B cell (primary cell): ENCODE measurements at regions of chr9 and their contacts with region 1.

Region 1: GRCh38 chr9:37209431-37210386 is 89.3 kb downstream of the ZCCHC7 start:
- DNase-seq: peak; percentile 49
- ATAC-seq: peak; percentile 36
- H3K4me3 ChIP-seq: peak overlapping the region in 2 of 5 experiments; percentile 2 to 46
- H3K4me3 Mint-ChIP-seq: peak overlapping the region; percentile 80
- H3K27ac ChIP-seq: peak overlapping the region; percentile 71 to 87
- H3K27ac Mint-ChIP-seq: peak overlapping the region; percentile 92
- H3K4me1 ChIP-seq: peaks cover 57 to 82% of the 10 kb centered on the region in 2 donors
- H3K4me1 Mint-ChIP-seq: peaks cover 65% of the 10 kb centered on the region
- H3K27me3 ChIP-seq: no peaks in the 10 kb centered on the region
- H3K27me3 Mint-ChIP-seq: no peaks in the 10 kb centered on the region
- CTCF ChIP-seq: no peak

Region 2: GRCh38 chr9:36946653-36947052 is 263.1 kb before region 1 on chr9:
- CTCF ChIA-PET with region 1: no interaction called
- POLR2A ChIA-PET with region 1: interaction called, 10 read pairs
- intact Hi-C with region 1: no loop called
- DNase-seq: no peak
- ATAC-seq: no peak
- H3K4me3 ChIP-seq: no peak overlapping the region
- H3K4me3 Mint-ChIP-seq: no peak overlapping the region
- H3K27ac ChIP-seq: peak overlapping the region in 1 of 2 donors; percentile 77
- H3K27ac Mint-ChIP-seq: peak overlapping the region; percentile 86
- H3K4me1 ChIP-seq: peaks cover 36 to 38% of the 10 kb centered on the region in 2 donors
- H3K4me1 Mint-ChIP-seq: peaks cover 62% of the 10 kb centered on the region
- H3K27me3 ChIP-seq: no peaks in the 10 kb centered on the region
- H3K27me3 Mint-ChIP-seq: no peaks in the 10 kb centered on the region
- CTCF ChIP-seq: no peak

Region 3: DNA sequence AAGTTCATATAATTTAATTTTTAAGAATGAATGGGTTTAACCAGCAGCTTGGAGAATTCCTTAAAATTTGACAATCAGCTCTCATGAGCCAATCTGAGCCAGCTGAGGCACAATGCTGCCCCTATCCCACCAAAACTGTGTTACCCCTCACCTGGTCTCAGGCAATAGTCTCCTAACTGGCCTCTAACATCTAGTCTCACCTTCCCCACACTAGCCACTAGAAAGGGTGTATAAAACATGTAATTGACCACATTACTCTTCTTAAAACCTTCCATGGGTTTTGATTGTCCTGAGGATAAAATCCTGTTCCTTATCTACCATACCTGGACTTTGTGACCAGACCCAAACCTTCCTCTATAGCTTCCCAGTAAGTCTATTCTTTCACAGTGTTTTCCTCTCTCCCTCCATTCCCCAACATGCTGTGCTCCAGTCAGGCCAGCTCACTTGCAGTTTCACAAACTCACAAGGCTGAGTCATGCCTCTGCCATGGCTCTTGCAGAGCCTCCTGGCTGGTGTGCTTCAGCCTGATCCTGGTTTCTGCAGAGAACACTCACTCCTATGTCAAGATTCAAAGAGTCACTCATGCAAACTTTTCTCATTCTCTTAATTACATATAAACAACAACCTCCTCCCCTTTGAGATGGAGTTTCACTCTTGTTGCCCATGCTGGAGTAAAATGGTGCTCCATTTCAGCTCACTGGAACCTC is 105.4 kb before region 1 on chr9:
- CTCF ChIA-PET with region 1: no interaction called
- POLR2A ChIA-PET with region 1: no interaction called
- intact Hi-C with region 1: no loop called
- DNase-seq: no peak
- ATAC-seq: no peak
- H3K4me3 ChIP-seq: no peak overlapping the region
- H3K4me3 Mint-ChIP-seq: no peak overlapping the region
- H3K27ac ChIP-seq: no peak overlapping the region
- H3K27ac Mint-ChIP-seq: no peak overlapping the region
- H3K4me1 ChIP-seq: peaks cover 38 to 43% of the 10 kb centered on the region in 2 donors
- H3K4me1 Mint-ChIP-seq: peaks cover 53% of the 10 kb centered on the region
- H3K27me3 ChIP-seq: no peaks in the 10 kb centered on the region
- H3K27me3 Mint-ChIP-seq: no peaks in the 10 kb centered on the region
- CTCF ChIP-seq: no peak

Region 4: DNA sequence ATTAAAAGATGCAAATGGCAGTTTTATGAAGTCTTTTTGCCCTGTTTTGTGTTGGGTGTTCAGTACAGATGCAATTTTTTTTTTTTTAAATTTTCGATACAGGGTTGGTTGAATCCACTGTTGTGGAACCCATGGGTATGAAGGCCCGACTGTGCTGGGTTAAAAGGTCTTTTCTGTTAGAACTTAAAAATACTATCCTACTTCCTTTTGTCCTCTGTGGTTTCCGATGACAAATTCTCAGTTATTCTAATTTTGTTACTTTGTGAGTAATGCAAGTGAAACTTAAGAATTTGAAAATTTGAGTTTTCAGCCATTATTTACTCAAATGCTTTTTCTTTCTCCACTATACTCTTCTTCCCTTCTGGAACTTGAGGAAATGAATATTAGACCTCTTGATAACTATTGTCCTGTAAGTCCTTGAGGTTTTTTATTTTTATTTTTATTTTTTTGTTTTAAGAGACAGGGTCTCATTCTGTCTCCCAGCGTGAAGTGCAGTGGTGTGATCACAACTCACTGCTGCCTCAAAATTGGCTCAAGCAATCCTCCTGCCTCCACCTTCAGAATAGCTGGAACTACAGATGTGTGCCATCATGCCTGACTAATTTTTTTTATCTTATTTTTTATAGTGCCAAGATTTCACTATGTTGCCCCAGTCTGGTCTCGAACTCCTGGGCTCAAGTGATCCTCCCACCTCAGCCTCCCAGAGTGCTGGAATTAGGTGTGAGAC is 21.8 kb before region 1 on chr9:
- CTCF ChIA-PET with region 1: interaction called, 13 read pairs
- POLR2A ChIA-PET with region 1: interaction called, 5 read pairs
- intact Hi-C with region 1: no loop called
- DNase-seq: no peak
- ATAC-seq: peak; percentile 78
- H3K4me3 ChIP-seq: peak overlapping the region; percentile 29 to 56 (median 41)
- H3K4me3 Mint-ChIP-seq: peak overlapping the region; percentile 82
- H3K27ac ChIP-seq: peak overlapping the region; percentile 89 to 92
- H3K27ac Mint-ChIP-seq: peak overlapping the region; percentile 70
- H3K4me1 ChIP-seq: peaks cover 46 to 76% of the 10 kb centered on the region in 2 donors
- H3K4me1 Mint-ChIP-seq: peaks cover 75% of the 10 kb centered on the region
- H3K27me3 ChIP-seq: no peaks in the 10 kb centered on the region
- H3K27me3 Mint-ChIP-seq: no peaks in the 10 kb centered on the region
- CTCF ChIP-seq: no peak

Region 5: DNA sequence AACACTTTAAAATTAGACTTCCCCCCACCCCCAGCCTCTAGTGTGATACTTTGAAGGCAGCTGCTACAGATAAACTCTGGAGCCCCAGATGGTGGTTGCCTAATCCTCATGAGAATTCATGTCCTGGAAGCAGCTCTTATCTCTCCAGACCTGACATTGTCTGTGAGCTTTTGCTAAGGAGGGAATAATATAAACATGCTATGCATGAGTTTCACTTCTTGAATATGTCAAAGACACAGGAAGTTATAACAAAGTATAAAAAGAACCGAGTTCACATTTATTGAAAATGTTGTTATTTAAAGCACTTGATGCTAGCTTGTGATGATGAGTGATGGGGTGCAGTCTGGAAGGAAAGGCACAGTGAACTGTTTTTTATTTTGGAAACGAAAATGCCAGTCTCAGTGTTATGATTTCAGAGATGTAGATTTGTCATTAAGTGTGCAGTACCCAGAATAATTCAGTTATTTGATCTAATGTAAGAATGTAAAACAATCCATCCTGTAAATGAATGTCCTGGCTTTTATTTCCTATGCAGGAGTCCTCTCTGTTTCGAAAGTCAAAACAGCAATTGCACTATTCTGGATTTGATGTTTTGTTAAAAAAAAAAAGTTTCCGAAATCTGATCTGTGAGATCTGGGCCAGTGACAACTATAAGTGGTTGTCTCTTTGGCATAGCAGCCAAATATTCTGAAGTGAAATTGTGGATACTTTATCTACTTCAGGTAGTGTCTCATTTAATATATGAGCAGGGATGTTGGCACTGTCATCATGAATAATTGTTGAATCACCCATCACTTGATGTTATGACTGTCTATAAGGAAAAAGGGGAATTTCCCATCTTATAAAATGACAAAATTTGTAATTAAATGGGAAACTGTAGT is 12.3 kb before region 1 on chr9:
- CTCF ChIA-PET with region 1: interaction called, 13 read pairs
- POLR2A ChIA-PET with region 1: interaction called, 6 read pairs
- intact Hi-C with region 1: loop called (anchors 1 kb)
- DNase-seq: peak; percentile 83
- ATAC-seq: peak; percentile 79
- H3K4me3 ChIP-seq: peak overlapping the region in 3 of 5 experiments; percentile 13 to 35 (median 21)
- H3K4me3 Mint-ChIP-seq: peak overlapping the region; percentile 76
- H3K27ac ChIP-seq: peak overlapping the region; percentile 81 to 87
- H3K27ac Mint-ChIP-seq: peak overlapping the region; percentile 87
- H3K4me1 ChIP-seq: peaks cover 83 to 91% of the 10 kb centered on the region in 2 donors
- H3K4me1 Mint-ChIP-seq: peaks cover 82% of the 10 kb centered on the region
- H3K27me3 ChIP-seq: no peaks in the 10 kb centered on the region
- H3K27me3 Mint-ChIP-seq: no peaks in the 10 kb centered on the region
- CTCF ChIP-seq: no peak

Region 6: GRCh38 chr9:37229882-37230487 is 20.3 kb after region 1 on chr9:
- CTCF ChIA-PET with region 1: interaction called, 4 read pairs
- POLR2A ChIA-PET with region 1: no interaction called
- intact Hi-C with region 1: loop called (anchors 2 kb)
- DNase-seq: no peak
- ATAC-seq: no peak
- H3K4me3 ChIP-seq: no peak overlapping the region
- H3K4me3 Mint-ChIP-seq: no peak overlapping the region
- H3K27ac ChIP-seq: no peak overlapping the region
- H3K27ac Mint-ChIP-seq: peak overlapping the region; percentile 2
- H3K4me1 ChIP-seq: peaks cover 20 to 40% of the 10 kb centered on the region in 2 donors
- H3K4me1 Mint-ChIP-seq: peaks cover 49% of the 10 kb centered on the region
- H3K27me3 ChIP-seq: no peaks in the 10 kb centered on the region
- H3K27me3 Mint-ChIP-seq: no peaks in the 10 kb centered on the region
- CTCF ChIP-seq: no peak

Region 7: DNA sequence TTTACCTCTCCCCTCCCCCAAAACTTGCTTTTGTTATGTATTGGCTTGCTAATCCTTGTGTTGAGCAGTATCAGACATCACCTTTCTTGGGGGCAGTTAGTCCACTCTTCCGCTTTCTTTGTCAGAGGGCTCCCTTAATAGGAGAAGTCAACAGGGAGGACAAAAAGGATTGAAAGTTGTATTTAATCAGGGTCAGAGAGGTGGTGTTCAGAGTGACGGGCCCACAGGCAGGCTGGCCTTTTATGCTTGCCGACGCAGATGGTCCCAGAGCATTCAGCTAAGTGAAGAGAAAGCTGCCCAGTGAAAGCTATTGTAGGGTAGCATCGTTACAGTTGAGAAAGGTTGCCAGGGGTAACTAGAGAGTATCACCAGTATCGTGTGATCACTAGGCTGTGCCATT is 41.7 kb after region 1 on chr9:
- CTCF ChIA-PET with region 1: interaction called, 3 read pairs
- POLR2A ChIA-PET with region 1: no interaction called
- intact Hi-C with region 1: loop called (anchors 5 kb)
- DNase-seq: peak; percentile 81
- ATAC-seq: peak; percentile 93
- H3K4me3 ChIP-seq: peak overlapping the region in 1 of 5 experiments; percentile 18
- H3K4me3 Mint-ChIP-seq: peak overlapping the region; percentile 66
- H3K27ac ChIP-seq: peak overlapping the region; percentile 62 to 90
- H3K27ac Mint-ChIP-seq: peak overlapping the region; percentile 96
- H3K4me1 ChIP-seq: peaks cover 34 to 50% of the 10 kb centered on the region in 2 donors
- H3K4me1 Mint-ChIP-seq: peaks cover 59% of the 10 kb centered on the region
- H3K27me3 ChIP-seq: no peaks in the 10 kb centered on the region
- H3K27me3 Mint-ChIP-seq: no peaks in the 10 kb centered on the region
- CTCF ChIP-seq: no peak

Region 8: GRCh38 chr9:37269221-37269620 is 59.5 kb after region 1 on chr9:
- CTCF ChIA-PET with region 1: no interaction called
- POLR2A ChIA-PET with region 1: no interaction called
- intact Hi-C with region 1: no loop called
- DNase-seq: no peak
- ATAC-seq: no peak
- H3K4me3 ChIP-seq: no peak overlapping the region
- H3K4me3 Mint-ChIP-seq: no peak overlapping the region
- H3K27ac ChIP-seq: peak overlapping the region in 1 of 2 donors; percentile 10
- H3K27ac Mint-ChIP-seq: peak overlapping the region; percentile 3
- H3K4me1 ChIP-seq: peaks cover 14 to 29% of the 10 kb centered on the region in 2 donors
- H3K4me1 Mint-ChIP-seq: peaks cover 44% of the 10 kb centered on the region
- H3K27me3 ChIP-seq: no peaks in the 10 kb centered on the region
- H3K27me3 Mint-ChIP-seq: no peaks in the 10 kb centered on the region
- CTCF ChIP-seq: no peak

Region 9: GRCh38 chr9:37324261-37324683 is 114.6 kb after region 1 on chr9:
- CTCF ChIA-PET with region 1: no interaction called
- POLR2A ChIA-PET with region 1: interaction called, 14 read pairs
- intact Hi-C with region 1: no loop called
- DNase-seq: peak; percentile 90
- ATAC-seq: peak; percentile 84
- H3K4me3 ChIP-seq: peak overlapping the region in 2 of 5 experiments; percentile 7 to 31
- H3K4me3 Mint-ChIP-seq: peak overlapping the region; percentile 76
- H3K27ac ChIP-seq: peak overlapping the region; percentile 97 to 98
- H3K27ac Mint-ChIP-seq: peak overlapping the region; percentile 100
- H3K4me1 ChIP-seq: peaks cover 43 to 78% of the 10 kb centered on the region in 2 donors
- H3K4me1 Mint-ChIP-seq: peaks cover 62% of the 10 kb centered on the region
- H3K27me3 ChIP-seq: no peaks in the 10 kb centered on the region
- H3K27me3 Mint-ChIP-seq: no peaks in the 10 kb centered on the region
- CTCF ChIP-seq: no peak